Gastrocnemius medialis (tissue), 4 donors: ENCODE measurements at regions of chr4 and their contacts with region 1.

Region 1: DNA sequence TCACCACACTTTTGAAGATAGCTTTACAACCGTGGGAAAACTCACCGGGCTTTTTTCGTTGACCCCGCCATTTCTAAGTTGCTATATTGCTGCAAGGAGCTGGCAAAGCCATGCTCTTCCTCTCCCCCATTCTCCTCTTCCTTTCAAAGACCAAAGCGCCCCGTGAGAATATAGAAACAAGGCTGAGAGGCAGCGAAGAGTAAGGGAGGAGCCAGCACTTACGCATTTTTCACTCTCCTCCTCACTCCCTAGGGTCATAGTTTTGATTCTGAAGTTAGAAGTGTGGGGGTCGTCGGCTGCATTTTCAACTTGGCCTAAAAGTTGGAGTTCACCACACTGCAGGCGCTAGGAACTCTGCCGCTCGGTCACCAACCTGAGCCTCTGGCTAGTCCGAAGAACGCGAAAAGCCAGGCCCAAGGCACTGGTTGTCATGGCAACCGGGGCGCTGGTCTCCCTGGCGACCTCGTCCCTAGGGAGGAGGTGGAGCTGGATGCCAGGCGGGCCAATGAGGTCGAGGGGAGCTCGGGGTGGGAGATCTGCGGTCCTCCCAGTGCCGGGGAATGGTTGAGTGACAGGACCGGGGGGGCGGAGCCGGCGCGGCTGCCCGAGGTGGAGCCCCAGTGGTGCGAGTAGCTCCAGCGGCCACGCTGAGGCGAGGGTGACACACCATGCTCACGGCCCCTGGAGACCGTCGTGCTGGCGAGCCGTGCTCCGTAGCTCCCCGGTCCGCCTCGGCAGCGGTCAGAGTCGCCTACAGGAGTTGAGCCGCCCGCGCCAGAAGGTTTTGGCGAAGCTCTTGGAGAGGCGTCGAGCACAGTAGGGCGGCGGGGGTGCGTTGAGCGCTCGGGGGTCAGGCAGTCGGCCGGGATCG is at the start of gene PTPN13:
- DNase-seq: peak; percentile 79 to 80
- ATAC-seq: peak; percentile 74 to 83
- H3K4me3 ChIP-seq: peak within 1 kb of the TSS; percentile 43 to 56 (median 52)
- H3K27ac ChIP-seq: peak within 1 kb of the TSS; percentile 28 to 63 (median 50)
- H3K4me1 ChIP-seq: peaks cover 5 to 9% of the 10 kb centered on the region in 2 donors
- H3K27me3 ChIP-seq: peaks cover 20 to 36% (median 20%) of the 10 kb centered on the region in 3 donors
- CTCF ChIP-seq: no peak
- POLR2A ChIP-seq: peak; percentile 39 to 58
- total RNA-seq, gene PTPN13: 0.87 to 2.0 (median 1.6) TPM

Region 2: DNA sequence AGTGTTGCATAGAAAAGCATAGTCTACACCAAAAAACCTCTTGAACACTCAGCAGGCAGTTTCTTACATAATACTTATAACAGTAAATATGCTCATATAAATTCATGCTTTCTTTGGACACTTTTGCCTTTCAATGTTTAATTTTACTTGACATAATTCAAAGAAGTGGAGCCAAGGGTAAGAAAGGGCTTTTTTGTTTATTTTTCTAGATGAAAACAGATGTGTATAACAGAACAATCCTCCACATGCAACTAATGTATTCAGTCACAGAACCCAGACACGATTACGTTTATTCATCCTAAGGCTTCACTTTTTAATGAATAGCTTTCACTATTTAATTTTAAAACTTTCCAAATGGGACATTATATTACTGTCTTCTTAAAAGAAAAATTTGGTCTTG is 57.8 kb before region 1 on chr4:
- in situ Hi-C with region 1: no loop called
- intact Hi-C with region 1: no loop called
- DNase-seq: no peak
- ATAC-seq: no peak
- H3K4me3 ChIP-seq: no peak overlapping the region
- H3K27ac ChIP-seq: no peak overlapping the region
- H3K4me1 ChIP-seq: no peaks in the 10 kb centered on the region
- H3K27me3 ChIP-seq: no peaks in the 10 kb centered on the region
- CTCF ChIP-seq: no peak
- POLR2A ChIP-seq: no peak

Region 3: DNA sequence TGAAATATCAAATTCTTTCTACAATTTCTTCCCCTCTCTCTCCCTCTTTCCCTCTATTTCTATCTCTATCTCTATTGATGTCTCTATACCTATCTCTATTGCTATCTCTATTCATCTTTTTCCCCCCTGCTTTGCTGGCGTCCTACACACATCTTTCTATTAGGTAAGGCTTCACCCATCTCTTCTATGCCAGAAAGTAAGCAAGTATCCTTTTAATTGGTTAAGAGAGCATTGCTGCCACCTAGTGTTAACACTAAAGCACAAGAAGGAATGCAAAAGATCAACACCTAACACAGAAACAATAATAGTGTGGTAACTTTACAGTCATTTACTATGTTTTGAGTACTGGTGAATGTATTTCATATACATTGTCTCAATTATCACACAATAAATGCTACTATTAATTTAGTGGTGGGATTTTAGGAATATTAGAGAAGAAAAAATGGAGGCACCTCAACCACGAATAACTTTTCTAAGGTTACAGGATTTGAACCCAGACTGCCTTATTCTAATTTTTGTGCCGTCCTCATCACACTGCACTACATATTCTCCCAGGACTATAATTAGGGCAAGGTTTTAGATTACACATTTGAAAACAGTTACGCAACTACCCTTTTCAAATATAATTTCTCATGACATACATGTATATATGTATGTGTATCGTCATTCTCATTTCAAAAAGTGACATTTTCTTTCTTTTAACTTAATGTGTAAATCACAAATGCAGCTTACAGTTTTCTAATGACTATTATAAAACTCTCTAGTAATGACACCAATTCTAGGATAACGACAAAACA is 302.0 kb after region 1 on chr4:
- in situ Hi-C with region 1: no loop called
- intact Hi-C with region 1: loop called (anchors 10 kb)
- DNase-seq: no peak
- ATAC-seq: peak in 1 of 2 donors; percentile 64
- H3K4me3 ChIP-seq: no peak overlapping the region
- H3K27ac ChIP-seq: peak overlapping the region in 3 of 4 donors; percentile 22 to 47 (median 30)
- H3K4me1 ChIP-seq: peaks cover 7 to 8% of the 10 kb centered on the region in 2 donors
- H3K27me3 ChIP-seq: no peaks in the 10 kb centered on the region
- CTCF ChIP-seq: peak; percentile 43 to 76 (median 66)
- POLR2A ChIP-seq: no peak